ENCODE measurements at regions of chr17 and their contacts with region 1.

Region 1: GRCh38 chr17:49567871-49568694 is 7.6 kb upstream of the NXPH3 start:
- DNase-seq: peak; percentile 82
- ATAC-seq: peak; percentile 83
- H3K4me3 ChIP-seq: peak overlapping the region; percentile 41 to 76 (median 61)
- H3K27ac ChIP-seq: peak overlapping the region; percentile 3
- H3K4me1 ChIP-seq: peaks cover 45% of the 10 kb centered on the region
- H3K27me3 ChIP-seq: peaks cover 0 to 28% of the 10 kb centered on the region in 2 experiments; a peak in 3 of 5 replicates
- CTCF ChIP-seq: peak; percentile 100
- EP300 ChIP-seq: no peak
- POLR2A ChIP-seq: no peak
- RAD21 ChIP-seq: peak; percentile 99

Region 2: DNA sequence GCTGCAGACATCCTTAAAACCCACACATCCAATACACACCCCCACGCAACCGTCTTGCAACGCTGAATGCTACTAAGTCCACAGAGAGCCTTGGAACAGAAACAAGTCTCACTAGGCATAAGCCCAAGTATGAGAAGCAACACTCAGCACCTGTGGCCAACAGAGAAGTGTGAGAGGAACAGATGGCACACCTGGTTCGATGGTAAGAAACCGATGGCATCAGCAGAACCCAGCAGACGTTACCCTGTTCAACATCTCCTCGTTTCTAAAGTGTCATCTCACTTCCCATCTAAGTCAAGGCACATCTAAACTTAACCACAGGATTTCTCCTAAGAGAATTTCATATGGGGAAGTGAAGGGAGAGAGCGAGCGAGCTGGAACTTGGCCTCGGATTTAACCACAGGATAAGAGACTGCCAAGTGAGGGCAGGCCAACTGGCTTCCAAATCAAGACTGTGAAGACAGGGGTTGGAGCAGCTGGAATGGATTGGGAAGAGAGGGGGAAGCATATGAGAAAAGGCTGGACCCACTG is 48.6 kb after region 1 on chr17:
- CTCF ChIA-PET with region 1: interaction called, 9 read pairs
- POLR2A ChIA-PET with region 1: no interaction called
- in situ Hi-C with region 1: no loop called
- intact Hi-C with region 1: loop called (anchors 1 kb)
- DNase-seq: no peak
- ATAC-seq: no peak
- H3K4me3 ChIP-seq: no peak overlapping the region
- H3K27ac ChIP-seq: no peak overlapping the region
- H3K4me1 ChIP-seq: peaks cover 15% of the 10 kb centered on the region
- H3K27me3 ChIP-seq: no peaks in the 10 kb centered on the region
- CTCF ChIP-seq: no peak
- EP300 ChIP-seq: no peak
- POLR2A ChIP-seq: no peak
- RAD21 ChIP-seq: no peak

Region 3: DNA sequence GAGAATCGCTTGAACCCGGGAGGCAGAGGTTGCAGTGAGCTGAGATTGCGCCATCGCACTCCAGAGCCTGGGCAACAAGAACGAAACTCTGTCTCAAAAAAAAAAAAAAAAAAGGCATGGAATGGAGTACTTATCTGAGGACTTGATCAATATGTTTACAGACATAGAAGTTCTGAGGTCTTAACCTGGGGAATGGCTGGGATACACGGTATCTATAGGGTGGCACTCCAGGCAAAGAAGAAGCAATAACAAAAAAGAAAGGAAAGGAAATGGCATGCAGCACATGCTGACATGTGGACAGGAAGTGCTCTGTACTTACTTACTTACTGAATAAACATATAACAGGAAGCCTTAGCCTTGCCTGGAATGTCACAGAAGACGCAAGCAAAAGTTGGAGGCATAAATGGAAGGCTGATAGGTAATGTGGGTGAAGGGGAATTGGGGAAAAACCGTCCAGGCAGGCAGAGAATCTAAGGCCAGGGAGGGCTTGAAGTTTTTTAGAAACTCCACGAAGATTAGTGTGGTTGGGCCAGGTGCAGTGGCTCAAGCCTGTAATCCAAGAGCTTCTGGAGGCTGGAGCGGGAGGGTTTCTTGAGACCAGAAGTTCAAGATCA is 119.9 kb after region 1 on chr17:
- CTCF ChIA-PET with region 1: interaction called, 210 read pairs
- POLR2A ChIA-PET with region 1: interaction called, 11 read pairs
- in situ Hi-C with region 1: no loop called
- intact Hi-C with region 1: no loop called
- DNase-seq: peak; percentile 58
- ATAC-seq: peak; percentile 65
- H3K4me3 ChIP-seq: peak overlapping the region in 1 of 3 experiments; percentile 26; a peak in 2 of 6 replicates
- H3K27ac ChIP-seq: peak overlapping the region; percentile 5
- H3K4me1 ChIP-seq: peaks cover 56% of the 10 kb centered on the region
- H3K27me3 ChIP-seq: peaks cover 0 to 17% of the 10 kb centered on the region in 2 experiments; a peak in 2 of 5 replicates
- CTCF ChIP-seq: no peak
- EP300 ChIP-seq: 0 out of 4 replicates have a peak, but pooled peaks of 1 of the 2 experiments have one; percentile 4
- POLR2A ChIP-seq: no peak
- RAD21 ChIP-seq: no peak

Region 4: DNA sequence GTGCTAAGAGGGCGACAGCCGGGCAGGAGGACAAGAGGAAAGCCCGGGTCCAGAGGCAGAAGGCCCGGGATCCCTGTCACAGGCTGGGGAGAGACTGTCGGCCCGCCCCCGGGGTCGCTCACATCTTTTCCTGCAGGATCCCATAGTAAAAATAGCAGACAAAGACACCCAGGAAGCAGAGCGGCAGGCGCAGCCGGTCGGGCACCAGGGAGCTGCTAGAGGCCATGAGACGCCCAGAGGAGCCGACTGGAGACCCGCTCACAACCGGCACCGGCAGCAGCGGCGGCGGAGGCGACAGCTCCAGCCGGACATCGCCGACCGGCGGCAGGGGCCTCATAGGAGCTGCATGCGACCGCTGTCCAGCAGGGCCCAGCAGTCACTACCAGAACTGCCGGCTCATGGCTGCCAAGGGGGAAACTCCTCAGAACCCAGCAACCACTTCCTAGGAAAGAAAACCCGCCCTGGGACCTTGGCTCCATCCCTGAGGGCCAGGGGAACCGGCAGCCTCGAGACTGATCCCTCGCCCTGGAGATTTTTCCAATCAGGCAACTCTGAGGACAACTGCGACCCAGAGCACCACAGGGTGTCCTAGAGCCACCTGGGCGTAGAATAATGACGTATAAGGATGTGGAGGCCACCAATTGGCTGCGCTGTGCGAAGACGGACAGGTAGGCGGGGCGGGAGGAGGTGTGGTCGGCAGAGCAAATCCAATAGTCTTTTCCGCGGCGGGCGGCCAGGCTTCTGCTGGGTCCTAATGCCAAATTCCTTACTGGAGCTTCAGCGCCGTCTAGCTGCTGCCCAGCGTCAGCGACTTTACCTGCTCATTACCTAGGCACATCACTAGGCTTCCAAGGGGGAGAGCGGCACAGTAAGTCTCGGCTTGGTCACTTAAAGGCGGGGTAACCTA is 139.8 kb after region 1 on chr17 and contains the start of gene SLC35B1:
- CTCF ChIA-PET with region 1: interaction called, 70 read pairs
- POLR2A ChIA-PET with region 1: interaction called, 4 read pairs
- in situ Hi-C with region 1: loop called (anchors 5 kb)
- intact Hi-C with region 1: loop called (anchors 1 kb)
- DNase-seq: peak; percentile 99
- ATAC-seq: peak; percentile 93
- H3K4me3 ChIP-seq: peak within 1 kb of the TSS; percentile 76 to 95 (median 83)
- H3K27ac ChIP-seq: peak within 1 kb of the TSS; percentile 93
- H3K4me1 ChIP-seq: peaks cover 54% of the 10 kb centered on the region
- H3K27me3 ChIP-seq: no peaks in the 10 kb centered on the region; a peak in 1 of 5 replicates
- CTCF ChIP-seq: peak; percentile 98
- EP300 ChIP-seq: peak; percentile 13 to 27; a peak in 3 of 4 replicates
- POLR2A ChIP-seq: peak; percentile 58 to 87; a peak in 3 of 4 replicates
- RAD21 ChIP-seq: peak; percentile 69
- total RNA-seq, gene SLC35B1: 67.0 and 113 TPM in 2 replicates

Region 5: DNA sequence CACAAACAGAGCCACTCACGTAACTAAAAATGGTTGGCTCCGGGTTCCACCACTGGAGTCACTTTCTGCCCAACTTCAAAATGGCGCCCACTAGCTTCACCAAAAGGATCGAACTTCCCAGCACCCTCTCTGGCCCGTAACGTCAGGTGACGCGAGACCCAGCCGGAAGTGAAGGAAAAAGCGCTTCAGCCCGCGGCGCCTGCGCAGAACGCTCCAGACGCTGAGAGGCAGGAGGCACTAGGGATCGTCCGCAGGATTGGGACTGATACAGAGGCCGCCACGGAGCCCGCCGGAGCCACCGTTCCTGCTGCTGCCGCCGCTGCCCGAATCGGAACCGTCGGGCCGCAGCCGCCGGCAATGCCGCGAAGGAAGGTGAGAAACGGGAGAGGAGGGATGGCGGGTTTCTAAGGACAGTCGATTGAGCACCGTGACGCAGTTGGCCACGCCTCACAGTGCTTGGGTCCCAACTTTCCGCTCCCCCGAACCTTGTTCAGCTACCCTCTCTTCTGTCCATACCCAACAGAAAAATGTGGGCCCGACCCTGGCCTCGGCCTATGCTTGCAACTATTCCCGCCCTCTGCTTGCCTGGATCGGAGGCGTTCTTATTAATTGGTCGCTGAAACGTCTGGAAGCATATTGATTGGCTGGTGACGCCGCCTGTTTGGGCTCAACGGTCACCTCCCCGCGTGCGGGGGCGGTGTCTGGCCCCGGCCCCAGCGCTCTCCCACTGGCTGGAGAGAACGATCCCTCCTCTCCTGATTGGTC is 220.6 kb after region 1 on chr17 and contains the start of gene KAT7:
- CTCF ChIA-PET with region 1: interaction called, 3 read pairs
- POLR2A ChIA-PET with region 1: interaction called, 6 read pairs
- in situ Hi-C with region 1: loop called (anchors 5 kb)
- intact Hi-C with region 1: no loop called
- DNase-seq: peak; percentile 99
- ATAC-seq: peak; percentile 98
- H3K4me3 ChIP-seq: peak within 1 kb of the TSS; percentile 82 to 100 (median 97)
- H3K27ac ChIP-seq: peak within 1 kb of the TSS; percentile 98
- H3K4me1 ChIP-seq: peaks cover 26% of the 10 kb centered on the region
- H3K27me3 ChIP-seq: no peaks in the 10 kb centered on the region
- CTCF ChIP-seq: no peak; the same call in 1 of the 2 replicates
- EP300 ChIP-seq: no peak; a peak in 1 of 4 replicates
- POLR2A ChIP-seq: peak; percentile 94 to 99
- RAD21 ChIP-seq: peak; percentile 47; the same call in 1 of the 2 replicates
- total RNA-seq, gene KAT7: 39.2 and 43.8 TPM in 2 replicates

Region 6: DNA sequence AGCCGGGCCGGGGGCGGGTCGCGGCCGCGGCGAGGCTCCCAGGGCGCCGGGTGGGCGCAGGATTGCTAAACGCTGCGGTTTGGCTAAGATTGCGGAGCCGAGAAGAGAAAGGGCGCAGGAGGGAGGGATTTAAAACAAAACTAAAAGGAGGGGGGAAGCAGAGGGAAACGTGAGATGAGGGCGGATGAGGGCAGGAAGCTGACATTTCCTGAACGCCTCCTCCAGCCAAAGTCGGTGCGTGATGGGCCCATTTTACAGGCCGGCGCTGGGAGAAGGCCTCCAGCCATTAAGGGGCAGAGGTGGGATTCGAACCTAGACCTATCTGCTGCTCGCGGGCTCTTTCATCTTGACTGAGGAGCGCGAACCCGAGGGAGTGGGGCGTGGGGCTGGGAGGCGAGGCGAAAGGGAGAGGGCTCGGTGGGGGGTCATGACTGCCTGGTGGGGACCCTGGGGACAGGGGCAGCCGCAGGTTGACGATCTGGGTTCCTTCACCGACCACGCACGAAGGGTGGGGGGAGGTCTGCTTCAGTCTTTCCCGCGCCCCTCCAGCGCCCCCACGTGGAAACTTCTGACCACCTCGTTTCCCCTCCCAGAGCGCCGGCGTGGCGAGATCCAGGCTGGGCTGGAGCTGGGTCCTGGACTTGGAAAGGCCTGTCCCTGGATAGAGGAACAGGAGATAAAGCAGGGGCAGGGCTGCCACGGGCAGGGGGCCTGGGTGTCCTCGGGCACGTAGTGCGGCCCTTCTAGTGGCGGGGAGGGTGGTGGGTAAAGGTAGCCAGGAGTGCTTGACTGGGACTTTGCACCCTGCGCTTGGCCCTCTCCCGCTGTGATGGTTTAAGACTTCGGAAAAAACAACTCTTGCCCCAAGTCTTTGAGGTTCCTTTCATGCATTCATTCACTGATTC is 283.6 kb after region 1 on chr17:
- CTCF ChIA-PET with region 1: interaction called, 3 read pairs
- POLR2A ChIA-PET with region 1: no interaction called
- in situ Hi-C with region 1: loop called (anchors 5 kb)
- intact Hi-C with region 1: loop called (anchors 10 kb)
- DNase-seq: peak; percentile 56
- ATAC-seq: peak; percentile 76
- H3K4me3 ChIP-seq: peak overlapping the region; percentile 56 to 85 (median 69)
- H3K27ac ChIP-seq: no peak overlapping the region
- H3K4me1 ChIP-seq: peaks cover 24% of the 10 kb centered on the region
- H3K27me3 ChIP-seq: peaks cover 4 to 35% of the 10 kb centered on the region in 2 experiments; a peak in 4 of 5 replicates
- CTCF ChIP-seq: peak; percentile 96
- EP300 ChIP-seq: no peak
- POLR2A ChIP-seq: no peak
- RAD21 ChIP-seq: peak; percentile 65